CD4-positive, alpha-beta T cell (primary cell): ENCODE measurements at regions of chr6 and their contacts with region 1.

Region 1: DNA sequence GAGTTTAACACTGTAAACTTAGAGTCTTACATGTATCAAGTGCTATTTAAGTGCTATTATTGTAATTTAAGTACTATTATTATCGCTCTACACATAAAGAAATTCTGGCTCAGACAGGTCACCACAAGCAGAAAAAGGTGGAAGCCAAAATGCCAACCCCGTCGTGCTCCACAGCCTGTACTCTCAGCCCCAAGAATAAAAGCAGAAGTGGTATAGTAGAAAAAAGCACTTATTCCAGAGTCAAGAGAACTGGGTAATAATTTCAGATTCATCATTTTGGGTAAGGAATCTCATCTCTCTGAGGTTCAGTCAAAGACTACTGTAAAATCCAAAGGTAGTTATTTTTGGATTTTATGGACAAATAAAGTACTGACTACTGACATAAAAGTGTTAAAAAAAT is 943 bp downstream of the ZUP1 start:
- DNase-seq: peak in 1 of 14 experiments; percentile 22
- ATAC-seq: no peak
- H3K4me3 ChIP-seq: peak overlapping the region; percentile 74
- H3K4me3 Mint-ChIP-seq: peak overlapping the region; percentile 97
- H3K27ac ChIP-seq: no peak overlapping the region
- H3K27ac Mint-ChIP-seq: peak overlapping the region; percentile 96
- H3K4me1 ChIP-seq: peaks cover 21% of the 10 kb centered on the region
- H3K4me1 Mint-ChIP-seq: peaks cover 50% of the 10 kb centered on the region
- H3K27me3 ChIP-seq: no peaks in the 10 kb centered on the region
- H3K27me3 Mint-ChIP-seq: no peaks in the 10 kb centered on the region
- CTCF ChIP-seq: no peak

Region 2: GRCh38 chr6:116253505-116254296 is 413.9 kb before region 1 on chr6 and contains the start of gene TSPYL4:
- CTCF ChIA-PET with region 1: no interaction called
- POLR2A ChIA-PET with region 1: interaction called, 3 read pairs
- intact Hi-C with region 1: loop called (anchors 10 kb)
- DNase-seq: peak; percentile 80 to 98 (median 88)
- ATAC-seq: peak; percentile 96
- H3K4me3 ChIP-seq: peak within 1 kb of the TSS; percentile 91
- H3K4me3 Mint-ChIP-seq: no peak within 1 kb of the TSS
- H3K27ac ChIP-seq: peak within 1 kb of the TSS; percentile 92 to 94
- H3K27ac Mint-ChIP-seq: no peak within 1 kb of the TSS
- H3K4me1 ChIP-seq: peaks cover 31% of the 10 kb centered on the region
- H3K4me1 Mint-ChIP-seq: peaks cover 6% of the 10 kb centered on the region
- H3K27me3 ChIP-seq: no peaks in the 10 kb centered on the region
- H3K27me3 Mint-ChIP-seq: no peaks in the 10 kb centered on the region
- CTCF ChIP-seq: no peak
- total RNA-seq, gene TSPYL4: 35.9 to 37.7 TPM

Region 3: GRCh38 chr6:116680975-116681808 is 13.6 kb after region 1 on chr6 and contains the start of gene KPNA5:
- CTCF ChIA-PET with region 1: interaction called, 7 read pairs
- POLR2A ChIA-PET with region 1: interaction called, 18 read pairs
- intact Hi-C with region 1: loop called (anchors 1 kb)
- DNase-seq: peak; percentile 83 to 96 (median 90)
- ATAC-seq: peak; percentile 93
- H3K4me3 ChIP-seq: peak within 1 kb of the TSS; percentile 82
- H3K4me3 Mint-ChIP-seq: peak within 1 kb of the TSS; percentile 99
- H3K27ac ChIP-seq: peak within 1 kb of the TSS; percentile 85 to 89
- H3K27ac Mint-ChIP-seq: peak within 1 kb of the TSS; percentile 94
- H3K4me1 ChIP-seq: peaks cover 28% of the 10 kb centered on the region
- H3K4me1 Mint-ChIP-seq: peaks cover 60% of the 10 kb centered on the region
- H3K27me3 ChIP-seq: no peaks in the 10 kb centered on the region
- H3K27me3 Mint-ChIP-seq: no peaks in the 10 kb centered on the region
- CTCF ChIP-seq: no peak
- total RNA-seq, gene KPNA5: 60.0 to 66.0 TPM